Panc1 (cell line): ENCODE measurements at regions of chr2 and their contacts with region 1.

Region 1: DNA sequence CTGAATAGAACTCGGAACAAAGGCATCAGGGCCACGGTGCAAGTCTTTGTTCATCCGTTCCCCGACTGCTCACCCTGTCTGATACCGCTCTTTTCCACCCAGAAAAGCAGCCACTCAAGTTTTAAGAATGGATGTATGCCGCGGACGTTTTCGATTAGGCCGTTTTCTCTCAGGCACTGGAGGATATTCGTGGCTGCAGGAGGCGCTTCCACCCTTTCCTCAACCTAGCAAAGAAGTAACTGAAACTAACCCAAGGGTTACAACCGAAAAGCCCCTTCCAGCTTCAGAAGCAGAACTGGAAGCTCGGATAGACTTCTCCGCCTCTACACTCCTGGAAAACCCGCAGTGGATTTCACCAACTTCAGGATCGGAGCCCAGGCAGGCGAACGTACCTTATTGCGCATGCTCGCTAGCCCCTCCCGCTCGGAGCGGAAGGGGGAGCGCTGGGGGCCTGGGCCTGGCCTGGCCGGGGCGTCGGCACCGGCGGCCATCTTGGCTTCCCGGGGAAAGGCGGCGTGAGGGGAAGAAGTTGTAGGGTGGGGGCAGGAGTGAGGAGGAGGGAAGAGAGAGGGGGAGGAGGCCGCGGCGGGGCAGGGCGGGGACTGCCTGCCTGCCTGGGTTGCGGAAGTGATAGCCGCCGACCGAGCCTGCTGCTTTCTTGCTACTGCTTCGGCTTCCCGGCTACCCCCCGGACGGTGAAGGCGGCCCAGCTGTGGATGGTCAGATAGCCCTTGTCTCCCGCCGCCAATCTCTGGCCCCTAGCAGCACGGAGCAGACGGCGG is at the start of gene ACTR3:
- DNase-seq: peak; percentile 92
- ATAC-seq: peak; percentile 96
- H3K4me3 ChIP-seq: peak within 1 kb of the TSS; percentile 93 to 97
- H3K27ac ChIP-seq: peak within 1 kb of the TSS; percentile 98
- H3K4me1 ChIP-seq: peaks cover 46% of the 10 kb centered on the region
- H3K27me3 ChIP-seq: no peaks in the 10 kb centered on the region
- CTCF ChIP-seq: no peak
- total RNA-seq, gene ACTR3: 347 TPM

Region 2: DNA sequence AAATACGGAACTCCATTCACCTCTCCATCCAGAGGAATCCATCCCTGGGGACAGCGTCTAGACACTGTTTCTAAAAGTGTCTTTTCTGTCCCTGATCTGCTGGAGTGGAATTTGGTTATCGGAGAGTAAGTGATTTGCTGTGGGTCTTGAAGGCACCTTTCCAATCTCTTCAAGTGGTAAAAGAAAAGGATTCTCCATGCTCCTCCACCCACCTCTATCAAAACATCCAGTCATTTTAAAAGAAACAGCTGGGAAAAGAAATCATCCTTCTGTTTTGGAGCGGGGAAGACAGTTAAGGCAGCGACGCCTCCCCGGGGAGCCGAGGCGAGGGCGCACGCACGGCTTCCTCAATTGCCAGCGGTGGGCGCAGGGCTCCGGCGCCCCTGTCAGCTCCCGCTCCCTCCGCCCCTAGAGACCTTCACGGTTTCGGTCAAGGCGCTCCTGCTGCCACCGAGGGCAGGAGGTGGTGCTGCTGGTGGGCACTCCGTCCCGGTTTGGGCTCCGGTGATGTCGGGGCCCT is 133.8 kb before region 1 on chr2:
- CTCF ChIA-PET with region 1: no interaction called
- POLR2A ChIA-PET with region 1: no interaction called
- in situ Hi-C with region 1: no loop called
- intact Hi-C with region 1: loop called (anchors 2 kb)
- DNase-seq: no peak
- ATAC-seq: peak; percentile 77
- H3K4me3 ChIP-seq: peak overlapping the region; percentile 85 to 89
- H3K27ac ChIP-seq: peak overlapping the region; percentile 89
- H3K4me1 ChIP-seq: peaks cover 12% of the 10 kb centered on the region; the same call in 1 of the 2 replicates
- H3K27me3 ChIP-seq: no peaks in the 10 kb centered on the region
- CTCF ChIP-seq: no peak

Region 3: DNA sequence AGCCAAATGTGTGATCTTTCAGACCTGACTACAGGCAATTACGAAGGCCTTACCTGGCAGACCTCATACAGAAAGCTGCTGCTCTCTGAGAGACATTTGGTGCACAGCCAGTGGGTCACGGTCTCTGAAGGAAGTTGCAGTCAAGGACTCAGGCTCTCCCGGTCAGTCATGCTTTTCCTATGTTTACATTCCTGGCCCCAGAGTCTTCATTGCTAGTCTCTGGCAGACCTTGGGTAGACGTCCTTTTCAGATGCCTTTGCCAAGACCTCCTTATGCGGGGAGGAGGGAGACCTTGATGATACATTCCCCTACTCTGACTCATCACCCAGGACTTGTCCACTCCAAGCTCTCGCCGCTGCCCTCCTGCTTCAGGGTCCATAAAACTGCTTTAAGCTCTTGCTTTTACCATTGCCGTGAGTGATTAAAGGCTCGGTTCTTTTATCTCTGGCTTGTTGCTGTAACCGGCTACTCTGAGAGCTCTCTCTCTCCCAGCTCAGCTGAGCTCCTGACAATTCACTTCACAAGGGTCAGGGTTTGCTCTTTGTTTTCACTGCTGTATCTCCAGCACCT is 71.2 kb before region 1 on chr2:
- CTCF ChIA-PET with region 1: no interaction called
- POLR2A ChIA-PET with region 1: no interaction called
- in situ Hi-C with region 1: no loop called
- intact Hi-C with region 1: no loop called
- DNase-seq: peak; percentile 47
- ATAC-seq: peak; percentile 92
- H3K4me3 ChIP-seq: peak overlapping the region in 1 of 2 experiments; percentile 34; a peak in 2 of 4 replicates
- H3K27ac ChIP-seq: peak overlapping the region; percentile 77
- H3K4me1 ChIP-seq: peaks cover 17% of the 10 kb centered on the region
- H3K27me3 ChIP-seq: no peaks in the 10 kb centered on the region
- CTCF ChIP-seq: no peak

Region 4: DNA sequence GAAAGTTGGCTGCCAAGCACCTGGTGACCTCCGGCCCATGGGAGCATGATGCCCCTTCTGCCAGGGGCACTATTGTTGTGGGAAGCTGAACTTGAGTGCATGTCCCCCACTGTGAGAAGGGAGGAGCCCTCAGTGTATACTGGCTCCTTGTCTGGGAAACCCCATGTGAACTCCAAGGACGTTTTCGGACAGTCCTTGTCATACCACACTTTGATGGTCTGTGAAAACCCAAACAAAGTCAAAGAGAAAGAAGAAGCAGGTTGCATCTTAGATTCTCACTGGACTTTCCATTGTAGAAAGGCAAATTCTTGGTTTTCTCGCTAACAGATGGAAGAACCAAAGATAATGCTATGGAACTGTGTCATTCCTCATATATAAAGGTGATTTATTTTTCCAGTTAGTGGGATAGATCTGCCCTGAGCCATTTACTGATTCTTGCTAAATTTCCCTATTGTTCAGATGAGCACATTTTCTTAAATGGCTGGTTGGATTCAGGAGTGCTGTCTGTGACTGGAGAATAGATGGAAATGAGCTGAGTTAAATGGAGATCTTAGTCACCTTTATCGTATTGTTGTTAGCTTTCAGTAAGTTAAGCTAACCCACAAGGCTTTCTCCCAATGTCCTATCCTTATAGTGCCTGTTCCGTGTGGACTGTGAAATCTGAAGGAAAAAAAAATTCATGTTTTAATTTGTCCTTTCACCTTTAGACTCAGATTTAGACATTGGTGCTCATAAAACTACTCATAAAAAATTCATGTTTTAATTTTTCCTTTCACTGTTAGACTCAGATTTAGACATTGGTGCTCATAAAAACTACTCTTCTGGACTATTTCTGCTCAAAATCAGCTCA is 166.9 kb after region 1 on chr2:
- CTCF ChIA-PET with region 1: no interaction called
- POLR2A ChIA-PET with region 1: interaction called, 13 read pairs
- in situ Hi-C with region 1: no loop called
- intact Hi-C with region 1: no loop called
- DNase-seq: no peak
- ATAC-seq: no peak
- H3K4me3 ChIP-seq: no peak overlapping the region
- H3K27ac ChIP-seq: no peak overlapping the region
- H3K4me1 ChIP-seq: no peaks in the 10 kb centered on the region
- H3K27me3 ChIP-seq: peaks cover 20% of the 10 kb centered on the region
- CTCF ChIP-seq: no peak

Region 5: GRCh38 chr2:114614592-114614991 is 724.9 kb after region 1 on chr2:
- CTCF ChIA-PET with region 1: no interaction called
- POLR2A ChIA-PET with region 1: no interaction called
- in situ Hi-C with region 1: no loop called
- intact Hi-C with region 1: no loop called
- DNase-seq: no peak
- ATAC-seq: no peak
- H3K4me3 ChIP-seq: no peak overlapping the region
- H3K27ac ChIP-seq: no peak overlapping the region
- H3K4me1 ChIP-seq: no peaks in the 10 kb centered on the region
- H3K27me3 ChIP-seq: no peaks in the 10 kb centered on the region
- CTCF ChIP-seq: no peak; the same call in 1 of the 2 replicates